H1 (cell line): ENCODE measurements at regions of chr12 and their contacts with region 1.

Region 1: DNA sequence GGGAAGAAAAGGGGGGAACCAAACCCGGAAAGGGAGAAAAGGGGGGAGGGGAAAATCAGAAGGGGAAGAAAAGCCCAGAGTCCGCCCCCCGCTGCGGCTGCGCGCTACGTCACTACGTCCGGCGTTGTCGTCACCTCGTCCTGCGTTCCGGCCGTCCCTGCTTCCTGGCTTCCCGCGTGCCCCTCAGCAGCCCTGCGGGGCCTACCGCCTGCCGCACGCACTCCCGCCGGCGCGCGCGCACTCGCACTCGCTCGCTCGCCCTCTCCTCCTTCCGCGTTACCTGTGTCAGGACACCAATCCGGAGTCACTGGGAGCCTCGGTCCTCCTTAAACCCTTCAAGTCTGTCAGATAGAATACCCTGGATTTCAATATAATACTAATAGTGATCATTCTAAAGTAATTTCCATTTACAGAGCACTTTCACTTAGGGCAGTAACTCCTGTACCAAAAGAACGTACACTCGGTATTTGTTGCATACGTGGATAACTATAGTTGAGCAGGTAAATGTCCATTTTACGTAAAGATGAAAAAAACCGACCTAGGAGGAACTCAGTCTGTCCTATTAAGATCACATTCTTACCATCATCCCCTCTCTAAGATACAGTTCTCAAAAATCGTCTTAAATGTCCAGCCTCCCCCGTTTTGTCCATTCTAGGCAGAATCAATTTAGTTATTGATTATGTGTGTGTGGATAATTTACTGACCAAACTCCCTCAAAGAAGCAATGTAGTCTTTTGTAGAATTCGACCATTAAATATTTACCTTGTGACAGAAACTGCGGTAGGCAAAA is at the start of gene R3HDM2:
- DNase-seq: peak; percentile 90 to 99
- H3K4me3 ChIP-seq: peak within 1 kb of the TSS; percentile 55 to 73 (median 70)
- H3K27ac ChIP-seq: peak within 1 kb of the TSS; percentile 81; the same call in 1 of the 2 replicates
- H3K4me1 ChIP-seq: peaks cover 0 to 5% (median 2%) of the 10 kb centered on the region in 4 experiments; a peak in 5 of 7 replicates
- H3K27me3 ChIP-seq: no peaks in the 10 kb centered on the region
- CTCF ChIP-seq: no peak
- EP300 ChIP-seq: peak in 1 of 2 experiments; percentile 47; a peak in 1 of 3 replicates
- POLR2A ChIP-seq: peak in 1 of 2 experiments; percentile 87; a peak in 2 of 3 replicates
- RAD21 ChIP-seq: no peak
- total RNA-seq, gene R3HDM2: 23.7 and 27.0 TPM in 2 replicates

Region 2: GRCh38 chr12:57410534-57410933 is 20.6 kb before region 1 on chr12:
- CTCF ChIA-PET with region 1: interaction called, 6 read pairs
- POLR2A ChIA-PET with region 1: interaction called, 23 read pairs
- DNase-seq: no peak
- H3K4me3 ChIP-seq: no peak overlapping the region
- H3K27ac ChIP-seq: no peak overlapping the region
- H3K4me1 ChIP-seq: no peaks in the 10 kb centered on the region; a peak in 1 of 7 replicates
- H3K27me3 ChIP-seq: no peaks in the 10 kb centered on the region
- CTCF ChIP-seq: no peak
- EP300 ChIP-seq: no peak
- POLR2A ChIP-seq: no peak
- RAD21 ChIP-seq: no peak

Region 3: DNA sequence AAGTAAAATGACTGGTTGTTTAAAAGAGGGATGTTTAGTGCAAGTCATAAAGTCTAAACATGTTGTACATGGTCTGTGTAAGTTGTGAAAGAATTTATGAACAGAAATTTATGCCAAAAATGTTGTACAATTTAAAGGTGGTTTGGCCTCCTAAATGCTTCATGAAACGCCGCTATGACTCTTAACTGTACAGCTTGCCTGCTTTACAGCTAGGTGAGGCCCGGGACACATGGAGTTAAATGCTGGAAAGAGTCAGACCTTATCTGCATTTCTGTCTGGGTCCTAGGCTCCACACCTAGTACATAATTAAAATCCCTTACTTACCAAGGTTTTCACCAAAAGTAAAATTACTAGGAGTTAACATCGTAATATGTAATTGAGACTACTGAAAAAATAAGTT is 230.2 kb after region 1 on chr12:
- CTCF ChIA-PET with region 1: no interaction called
- POLR2A ChIA-PET with region 1: no interaction called
- DNase-seq: no peak
- H3K4me3 ChIP-seq: no peak overlapping the region
- H3K27ac ChIP-seq: no peak overlapping the region
- H3K4me1 ChIP-seq: no peaks in the 10 kb centered on the region
- H3K27me3 ChIP-seq: no peaks in the 10 kb centered on the region
- CTCF ChIP-seq: no peak
- EP300 ChIP-seq: no peak
- POLR2A ChIP-seq: no peak
- RAD21 ChIP-seq: no peak